Right ventricle myocardium inferior (tissue), 1 donor: ENCODE measurements at regions of chr21 and their contacts with region 1.

Region 1: GRCh38 chr21:44873356-44874239 is at the start of gene PTTG1IP:
- DNase-seq: peak; percentile 100
- ATAC-seq: peak; percentile 89
- total RNA-seq, gene PTTG1IP: 160 TPM

Region 2: GRCh38 chr21:44801468-44802395 is 71.9 kb before region 1 on chr21 and contains the start of gene UBE2G2:
- intact Hi-C with region 1: loop called (anchors 1 kb)
- DNase-seq: peak; percentile 94
- ATAC-seq: peak; percentile 94
- total RNA-seq, gene UBE2G2: 66.6 TPM

Region 3: GRCh38 chr21:44817506-44817880 is 56.1 kb before region 1 on chr21:
- intact Hi-C with region 1: loop called (anchors 1 kb)
- DNase-seq: peak; percentile 95
- ATAC-seq: peak; percentile 96

Region 4: GRCh38 chr21:44845399-44846223 is 28.0 kb before region 1 on chr21:
- intact Hi-C with region 1: loop called (anchors 2 kb)
- DNase-seq: peak; percentile 89
- ATAC-seq: peak; percentile 78